GM13976 (cell line): ENCODE measurements at regions of chr17 and their contacts with region 1.

Region 1: GRCh38 chr17:41738077-41738735 is 3.8 kb upstream of the HAP1 start:
- DNase-seq: peak; percentile 94
- CTCF ChIP-seq: peak; percentile 90

Region 2: DNA sequence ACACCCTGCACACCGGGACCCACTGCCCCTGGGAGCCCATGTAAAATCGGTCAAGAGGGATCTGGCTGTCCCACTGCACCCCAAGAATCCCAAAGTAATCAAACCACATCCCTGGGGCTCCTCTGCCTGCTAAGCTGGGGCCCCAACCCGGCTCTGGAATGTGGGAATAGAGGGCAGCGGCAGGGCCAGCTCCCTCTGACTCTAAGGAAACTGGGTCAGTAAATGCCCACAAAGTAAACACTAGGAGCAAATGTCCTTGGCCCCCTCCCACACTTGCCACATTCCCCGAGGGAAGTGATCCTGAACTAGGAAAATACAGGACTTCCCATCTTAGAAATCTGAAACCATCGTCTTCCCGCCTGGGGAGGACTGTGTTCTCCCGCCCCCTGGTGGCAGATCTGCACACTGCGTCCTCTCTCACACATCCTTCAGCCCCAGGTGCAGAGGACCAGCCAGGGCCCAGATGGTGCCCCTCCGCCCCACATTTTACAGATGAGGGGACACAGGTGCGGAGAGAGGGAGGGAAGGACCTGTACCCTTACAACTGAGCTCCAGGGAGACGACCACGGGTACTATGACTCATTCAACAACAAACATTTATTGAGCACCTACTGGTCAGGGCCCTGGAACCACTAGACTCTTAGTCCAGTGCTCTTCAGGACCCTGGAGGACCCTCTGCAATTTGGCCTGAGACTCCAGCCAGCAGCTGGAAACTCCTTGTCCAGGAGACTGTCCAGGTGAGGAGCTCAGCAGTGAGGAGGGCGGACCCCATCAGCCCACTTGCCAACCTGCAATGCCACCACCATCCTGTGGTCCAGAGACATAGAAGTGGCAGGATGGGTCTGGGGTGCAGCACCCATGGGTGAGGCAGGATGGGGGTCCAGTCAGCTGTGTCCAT is 63.4 kb after region 1 on chr17:
- in situ Hi-C with region 1: loop called (anchors 10 kb)
- DNase-seq: peak; percentile 89
- CTCF ChIP-seq: peak; percentile 95